ENCODE measurements at regions of chr4 and their contacts with region 1.

Region 1: DNA sequence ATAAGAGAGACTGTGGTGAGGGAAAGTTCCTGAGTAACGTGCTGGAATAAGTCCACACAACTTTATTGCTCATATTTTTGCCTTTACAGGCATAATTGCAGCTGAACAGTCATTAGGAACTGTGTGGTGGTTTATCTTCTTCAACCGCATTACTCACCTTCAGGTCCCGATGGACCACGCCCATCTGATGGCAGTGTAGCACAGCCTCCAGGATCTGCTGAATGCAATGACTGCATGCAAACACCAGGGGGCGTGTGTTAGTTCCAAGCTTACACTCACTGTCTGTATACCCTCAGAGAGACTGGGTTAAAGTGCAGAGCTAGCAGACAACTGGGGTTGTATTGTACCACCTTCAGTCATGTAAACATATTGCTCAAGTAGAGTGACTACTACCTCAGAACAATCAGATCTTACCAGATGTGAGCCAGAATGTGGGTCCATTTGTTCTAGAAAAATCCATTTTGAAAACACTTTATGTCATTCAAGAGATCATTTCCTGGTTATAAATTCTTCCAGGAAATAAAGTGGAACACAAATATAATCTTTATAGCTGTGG is 214.0 kb downstream of the CAMK2D start:
- DNase-seq: peak; percentile 59 to 89 (median 85)
- ATAC-seq: peak; percentile 100
- H3K4me3 ChIP-seq: no peak overlapping the region
- H3K4me3 Mint-ChIP-seq: peak overlapping the region in 1 of 10 donors; percentile 39
- H3K27ac ChIP-seq: peak overlapping the region; percentile 37
- H3K27ac Mint-ChIP-seq: peak overlapping the region; percentile 18 to 85 (median 73)
- H3K4me1 ChIP-seq: peaks cover 4 to 8% of the 10 kb centered on the region in 2 donors
- H3K4me1 Mint-ChIP-seq: peaks cover 4 to 22% (median 15%) of the 10 kb centered on the region in 7 donors
- H3K27me3 ChIP-seq: no peaks in the 10 kb centered on the region
- H3K27me3 Mint-ChIP-seq: no peaks in the 10 kb centered on the region

Region 2: GRCh38 chr4:113355550-113356371 is 191.8 kb before region 1 on chr4:
- CTCF ChIA-PET with region 1: no interaction called
- POLR2A ChIA-PET with region 1: no interaction called
- intact Hi-C with region 1: loop called in 1 of 2 experiments (anchors 5 kb)
- DNase-seq: peak in 8 of 9 donors; percentile 0 to 64 (median 17)
- ATAC-seq: peak; percentile 91
- H3K4me3 ChIP-seq: peak overlapping the region; percentile 34
- H3K4me3 Mint-ChIP-seq: peak overlapping the region; percentile 58 to 82 (median 71)
- H3K27ac ChIP-seq: no peak overlapping the region
- H3K27ac Mint-ChIP-seq: peak overlapping the region in 6 of 9 donors; percentile 14 to 90 (median 66)
- H3K4me1 ChIP-seq: peaks cover 7 to 13% of the 10 kb centered on the region in 2 donors
- H3K4me1 Mint-ChIP-seq: peaks cover 10 to 36% (median 20%) of the 10 kb centered on the region in 7 donors
- H3K27me3 ChIP-seq: no peaks in the 10 kb centered on the region
- H3K27me3 Mint-ChIP-seq: peaks cover 6 to 55% (median 18%) of the 10 kb centered on the region in 5 donors

Region 3: DNA sequence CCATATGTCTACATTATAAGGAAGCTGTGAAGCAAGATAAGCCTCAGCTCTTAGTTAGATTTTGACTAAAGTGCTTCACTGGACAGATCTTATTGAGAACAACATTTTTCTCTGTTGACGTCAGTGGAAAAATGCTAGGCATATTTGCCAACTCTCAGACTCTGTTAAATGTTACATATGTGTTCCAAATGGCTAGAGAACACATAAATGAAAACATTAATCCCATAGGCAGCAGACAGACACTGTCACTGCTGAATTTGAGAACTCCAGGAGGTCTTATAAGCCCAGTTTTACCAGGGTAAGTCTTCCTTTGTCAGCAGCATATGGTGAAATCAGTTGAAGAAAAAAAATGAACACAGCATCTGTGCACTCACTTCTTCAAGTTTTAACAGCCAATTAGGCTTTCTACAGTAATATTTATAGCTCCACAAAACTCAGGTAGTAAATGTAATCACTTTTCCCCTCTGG is 27.1 kb after region 1 on chr4:
- CTCF ChIA-PET with region 1: no interaction called
- POLR2A ChIA-PET with region 1: no interaction called
- intact Hi-C with region 1: loop called in 1 of 2 experiments (anchors 1 kb)
- DNase-seq: no peak
- ATAC-seq: no peak
- H3K4me3 ChIP-seq: no peak overlapping the region
- H3K4me3 Mint-ChIP-seq: no peak overlapping the region
- H3K27ac ChIP-seq: no peak overlapping the region
- H3K27ac Mint-ChIP-seq: peak overlapping the region in 3 of 9 donors; percentile 1 to 51 (median 3)
- H3K4me1 ChIP-seq: peaks cover 0 to 32% of the 10 kb centered on the region in 2 donors
- H3K4me1 Mint-ChIP-seq: peaks cover 38 to 82% (median 71%) of the 10 kb centered on the region in 7 donors
- H3K27me3 ChIP-seq: no peaks in the 10 kb centered on the region
- H3K27me3 Mint-ChIP-seq: no peaks in the 10 kb centered on the region

Region 4: DNA sequence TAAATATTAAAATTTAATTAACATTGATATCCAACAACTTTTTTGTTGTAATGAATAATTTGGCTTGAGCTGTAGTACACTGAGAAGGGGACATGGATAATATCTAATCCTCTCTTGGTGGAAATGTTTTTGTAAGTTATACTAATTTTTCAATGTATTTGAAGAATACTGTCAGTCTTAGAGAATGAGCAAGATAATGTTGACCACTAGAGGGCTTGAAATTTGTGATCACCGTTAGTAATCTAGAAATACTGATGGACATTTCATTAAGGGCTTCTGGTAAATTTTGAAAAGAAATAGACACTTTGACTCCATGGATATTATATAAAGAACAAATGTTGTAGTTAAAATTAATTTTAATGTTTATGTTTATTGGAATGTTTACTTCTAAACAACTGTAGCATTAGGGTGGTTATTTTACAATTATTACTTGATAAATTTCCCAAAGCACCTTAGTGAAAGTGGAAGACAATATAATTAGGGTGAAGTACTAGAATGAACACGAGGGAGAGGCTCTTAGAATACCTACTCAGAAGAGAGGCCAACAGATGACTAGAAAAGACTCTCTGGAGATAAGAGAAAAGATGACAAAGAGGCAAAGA is 234.0 kb after region 1 on chr4:
- CTCF ChIA-PET with region 1: interaction called, 3 read pairs
- POLR2A ChIA-PET with region 1: no interaction called
- intact Hi-C with region 1: loop called in 1 of 2 experiments (anchors 5 kb)
- DNase-seq: peak in 5 of 9 donors; percentile 21 to 28 (median 27)
- ATAC-seq: peak; percentile 41
- H3K4me3 ChIP-seq: no peak overlapping the region
- H3K4me3 Mint-ChIP-seq: no peak overlapping the region
- H3K27ac ChIP-seq: no peak overlapping the region
- H3K27ac Mint-ChIP-seq: no peak overlapping the region
- H3K4me1 ChIP-seq: no peaks in the 10 kb centered on the region
- H3K4me1 Mint-ChIP-seq: peaks cover 5 to 24% (median 12%) of the 10 kb centered on the region in 7 donors
- H3K27me3 ChIP-seq: no peaks in the 10 kb centered on the region
- H3K27me3 Mint-ChIP-seq: no peaks in the 10 kb centered on the region

Region 5: GRCh38 chr4:113908829-113909228 is 361.3 kb after region 1 on chr4:
- CTCF ChIA-PET with region 1: interaction called, 6 read pairs
- POLR2A ChIA-PET with region 1: no interaction called
- intact Hi-C with region 1: loop called in 1 of 2 experiments (anchors 1 kb)
- DNase-seq: peak in 5 of 9 donors; percentile 10 to 31 (median 26)
- ATAC-seq: no peak
- H3K4me3 ChIP-seq: no peak overlapping the region
- H3K4me3 Mint-ChIP-seq: no peak overlapping the region
- H3K27ac ChIP-seq: no peak overlapping the region
- H3K27ac Mint-ChIP-seq: peak overlapping the region in 2 of 9 donors; percentile 2 to 7
- H3K4me1 ChIP-seq: peaks cover 12 to 24% of the 10 kb centered on the region in 2 donors
- H3K4me1 Mint-ChIP-seq: peaks cover 6 to 57% (median 46%) of the 10 kb centered on the region in 7 donors
- H3K27me3 ChIP-seq: no peaks in the 10 kb centered on the region
- H3K27me3 Mint-ChIP-seq: no peaks in the 10 kb centered on the region

Region 6: DNA sequence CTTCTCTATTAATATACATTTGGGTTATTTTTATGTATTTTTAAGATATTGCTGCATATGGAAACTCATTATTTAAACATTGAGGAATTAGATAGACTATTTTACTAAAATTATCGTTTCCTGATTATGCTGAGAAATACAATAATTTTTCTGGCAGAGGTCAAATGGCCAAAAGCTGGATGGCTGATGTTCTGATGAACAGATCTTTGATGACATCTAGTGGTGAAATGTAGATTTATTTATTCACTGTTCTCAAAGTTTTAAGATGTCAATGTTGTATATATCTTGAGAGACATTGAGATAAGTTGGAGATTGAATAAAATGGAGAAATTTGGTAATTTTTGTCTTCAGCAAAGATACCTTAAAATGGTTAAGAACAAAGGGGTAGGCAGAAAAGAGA is 1147.2 kb after region 1 on chr4:
- CTCF ChIA-PET with region 1: no interaction called
- POLR2A ChIA-PET with region 1: no interaction called
- intact Hi-C with region 1: loop called in 1 of 2 experiments (anchors 2 kb)
- DNase-seq: peak in 5 of 9 donors; percentile 1 to 17 (median 9)
- ATAC-seq: no peak
- H3K4me3 ChIP-seq: no peak overlapping the region
- H3K4me3 Mint-ChIP-seq: no peak overlapping the region
- H3K27ac ChIP-seq: no peak overlapping the region
- H3K27ac Mint-ChIP-seq: no peak overlapping the region
- H3K4me1 ChIP-seq: no peaks in the 10 kb centered on the region
- H3K4me1 Mint-ChIP-seq: peaks cover 0 to 6% (median 0%) of the 10 kb centered on the region in 7 donors
- H3K27me3 ChIP-seq: no peaks in the 10 kb centered on the region
- H3K27me3 Mint-ChIP-seq: peaks cover 0 to 16% (median 7%) of the 10 kb centered on the region in 5 donors